Astrocyte of the cerebellum (primary cell): ENCODE measurements at regions of chr9 and their contacts with region 1.

Region 1: DNA sequence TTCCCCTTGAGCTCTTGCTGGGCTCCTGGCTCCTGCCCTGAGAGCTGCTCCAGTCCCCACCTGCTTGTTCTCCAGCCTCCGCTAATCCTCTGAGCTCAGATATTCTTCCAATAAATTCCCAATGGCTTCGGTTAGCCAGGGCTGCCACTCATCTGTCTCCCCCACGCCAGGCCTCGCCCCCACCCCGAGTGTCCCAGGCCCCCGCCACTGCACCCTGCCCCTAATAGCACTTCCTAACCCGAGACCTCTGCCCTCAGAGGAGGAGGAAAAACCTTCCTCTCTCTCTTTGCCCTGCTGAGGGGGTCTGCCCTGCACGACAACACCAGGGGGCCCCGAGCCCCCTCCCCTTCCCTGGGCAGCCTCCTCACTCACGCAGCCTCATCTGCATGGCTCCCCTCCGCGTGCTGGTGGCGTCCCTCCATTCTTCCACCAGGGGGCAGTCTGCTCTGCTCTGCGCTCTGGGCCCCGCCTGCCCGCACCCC is 5.4 kb upstream of the LCN15 start:
- DNase-seq: no peak
- H3K4me3 ChIP-seq: no peak overlapping the region
- CTCF ChIP-seq: peak; percentile 55

Region 2: DNA sequence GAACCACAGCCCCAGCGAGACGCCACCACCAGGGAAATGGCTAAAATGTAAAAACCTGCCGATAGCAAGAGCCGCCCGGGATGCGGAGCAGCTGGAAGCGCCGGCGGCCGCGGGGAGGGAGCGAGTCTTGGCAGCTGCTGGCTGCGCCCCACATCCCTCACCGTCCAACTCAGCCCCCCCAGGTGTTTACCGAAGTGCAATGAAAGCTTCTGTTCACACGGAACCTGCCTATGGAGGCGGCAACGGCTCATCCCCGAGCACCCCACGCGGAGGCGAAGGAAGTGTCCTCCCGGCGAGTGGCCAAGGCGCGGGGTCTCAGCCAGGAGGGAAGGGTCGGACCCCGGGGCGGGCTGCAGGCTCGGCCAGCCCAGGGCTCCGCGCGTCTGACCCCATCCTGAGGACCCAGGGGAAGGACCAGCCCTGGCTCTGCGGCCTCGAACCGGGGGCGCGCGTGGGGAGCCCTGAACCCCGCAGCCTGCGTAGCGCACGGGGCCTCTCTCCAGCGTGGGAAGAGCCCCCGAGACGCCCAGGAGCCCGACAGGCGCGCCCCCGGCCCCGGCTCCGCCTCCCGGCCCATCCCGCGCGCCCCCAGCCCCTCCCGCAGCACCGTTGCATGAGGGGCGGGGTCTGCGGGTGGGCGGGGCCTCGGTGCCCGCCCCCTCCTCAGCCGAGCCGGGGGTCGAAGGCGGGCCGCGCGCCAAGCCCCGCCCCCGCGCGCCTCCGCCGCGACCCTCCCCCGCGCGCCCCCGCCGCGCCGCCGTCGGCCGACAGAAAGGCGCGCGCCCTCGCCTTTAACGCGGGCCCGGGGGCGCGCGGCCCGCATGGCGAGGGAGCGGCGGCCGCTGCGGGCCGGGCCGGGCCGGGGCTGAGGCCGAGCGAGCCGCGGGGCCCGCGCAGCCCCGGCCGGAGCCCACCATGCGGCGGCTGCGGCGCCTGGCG is 57.7 kb before region 1 on chr9 and contains the start of gene DIPK1B:
- in situ Hi-C with region 1: loop called (anchors 5 kb)
- DNase-seq: no peak
- H3K4me3 ChIP-seq: peak within 1 kb of the TSS; percentile 47
- CTCF ChIP-seq: no peak

Region 3: GRCh38 chr9:136840140-136840687 is 70.5 kb after region 1 on chr9:
- in situ Hi-C with region 1: no loop called
- DNase-seq: no peak
- H3K4me3 ChIP-seq: no peak overlapping the region
- CTCF ChIP-seq: no peak